ENCODE measurements at regions of chr22 and their contacts with region 1.

Region 1: GRCh38 chr22:21942407-21943343 is 10.0 kb downstream of the PPM1F start:
- DNase-seq: peak in 3 of 4 donors; percentile 47 to 63 (median 48)
- ATAC-seq: no peak
- H3K4me3 ChIP-seq: no peak overlapping the region
- H3K27ac ChIP-seq: peak overlapping the region in 2 of 4 donors; percentile 55 to 63
- H3K4me1 ChIP-seq: peaks cover 21% of the 10 kb centered on the region
- H3K27me3 ChIP-seq: no peaks in the 10 kb centered on the region
- CTCF ChIP-seq: no peak
- POLR2A ChIP-seq: no peak

Region 2: DNA sequence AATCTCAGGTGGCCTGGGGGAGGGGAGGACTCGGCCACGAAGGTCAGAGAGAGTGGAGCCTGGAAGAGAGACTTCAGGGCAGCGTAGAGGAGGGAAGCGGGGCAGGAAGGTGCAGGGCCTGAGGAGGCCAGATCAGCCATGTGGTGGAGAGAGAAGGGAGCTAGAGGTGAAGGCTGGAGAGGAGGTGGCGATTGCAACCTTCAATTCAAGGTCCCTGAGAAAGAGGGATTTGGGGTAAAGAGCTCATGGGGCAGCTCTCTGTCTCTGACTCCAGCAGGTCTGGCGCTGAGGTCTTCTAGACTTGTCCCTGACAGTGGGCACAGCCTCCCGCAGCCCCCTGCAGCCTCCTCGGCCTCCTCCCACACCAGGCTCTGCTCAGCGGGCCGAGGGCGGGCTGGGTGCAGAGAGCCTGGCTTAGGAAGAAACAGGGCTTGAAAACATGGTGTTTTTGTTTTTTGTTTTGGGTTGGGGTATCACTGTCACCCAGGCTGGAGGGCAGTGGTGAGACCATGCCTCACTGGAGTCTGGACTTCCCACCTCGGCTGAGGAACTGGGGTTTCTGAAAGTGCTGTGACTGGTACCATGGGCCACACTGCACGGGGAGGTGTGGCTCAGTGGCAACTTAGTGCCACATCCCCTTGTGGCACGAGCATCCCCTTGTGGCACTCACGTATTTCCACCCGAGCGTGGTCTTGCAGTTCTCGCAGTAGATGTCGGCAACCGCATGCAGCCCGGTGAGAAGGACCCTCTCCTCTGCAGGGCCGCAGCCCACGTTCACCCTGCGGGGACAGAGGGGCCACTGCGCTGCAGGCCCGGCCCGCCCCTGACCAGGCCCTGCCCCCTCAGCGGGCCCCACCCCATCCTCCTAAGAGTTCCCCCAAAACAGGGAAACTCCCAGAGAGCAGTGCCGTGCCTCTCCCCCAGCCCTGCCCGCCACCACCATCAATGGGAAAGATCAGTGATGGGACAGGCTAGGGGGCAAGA is 239.7 kb before region 1 on chr22:
- intact Hi-C with region 1: no loop called
- DNase-seq: no peak
- ATAC-seq: no peak
- H3K4me3 ChIP-seq: no peak overlapping the region
- H3K27ac ChIP-seq: no peak overlapping the region
- H3K4me1 ChIP-seq: peaks cover 28% of the 10 kb centered on the region
- H3K27me3 ChIP-seq: no peaks in the 10 kb centered on the region
- CTCF ChIP-seq: no peak
- POLR2A ChIP-seq: no peak

Region 3: GRCh38 chr22:21712894-21713712 is 229.6 kb before region 1 on chr22:
- intact Hi-C with region 1: loop called (anchors 5 kb)
- DNase-seq: peak; percentile 71 to 80 (median 74)
- ATAC-seq: peak; percentile 88
- H3K4me3 ChIP-seq: no peak overlapping the region
- H3K27ac ChIP-seq: peak overlapping the region in 2 of 4 donors; percentile 34 to 54
- H3K4me1 ChIP-seq: peaks cover 25% of the 10 kb centered on the region
- H3K27me3 ChIP-seq: no peaks in the 10 kb centered on the region
- CTCF ChIP-seq: peak; percentile 60 to 86 (median 74)
- POLR2A ChIP-seq: no peak